ENCODE measurements at regions of chr1 and their contacts with region 1.

Region 1: GRCh38 chr1:41155105-41155504 is 87.0 kb downstream of the SCMH1 start:
- DNase-seq: no peak
- H3K4me3 ChIP-seq: no peak overlapping the region
- H3K27ac ChIP-seq: no peak overlapping the region
- H3K4me1 ChIP-seq: peaks cover 13% of the 10 kb centered on the region
- H3K27me3 ChIP-seq: no peaks in the 10 kb centered on the region
- CTCF ChIP-seq: no peak

Region 2: GRCh38 chr1:39901698-39902459 is 1253.2 kb before region 1 on chr1 and contains the start of gene MYCL:
- CTCF ChIA-PET with region 1: no interaction called
- POLR2A ChIA-PET with region 1: no interaction called
- intact Hi-C with region 1: no loop called
- DNase-seq: peak; percentile 87
- H3K4me3 ChIP-seq: peak within 1 kb of the TSS; percentile 73
- H3K27ac ChIP-seq: no peak within 1 kb of the TSS
- H3K4me1 ChIP-seq: peaks cover 4% of the 10 kb centered on the region
- H3K27me3 ChIP-seq: peaks cover 7% of the 10 kb centered on the region
- CTCF ChIP-seq: peak; percentile 61
- total RNA-seq, gene MYCL: 0.58 and 2.1 TPM in 2 replicates

Region 3: DNA sequence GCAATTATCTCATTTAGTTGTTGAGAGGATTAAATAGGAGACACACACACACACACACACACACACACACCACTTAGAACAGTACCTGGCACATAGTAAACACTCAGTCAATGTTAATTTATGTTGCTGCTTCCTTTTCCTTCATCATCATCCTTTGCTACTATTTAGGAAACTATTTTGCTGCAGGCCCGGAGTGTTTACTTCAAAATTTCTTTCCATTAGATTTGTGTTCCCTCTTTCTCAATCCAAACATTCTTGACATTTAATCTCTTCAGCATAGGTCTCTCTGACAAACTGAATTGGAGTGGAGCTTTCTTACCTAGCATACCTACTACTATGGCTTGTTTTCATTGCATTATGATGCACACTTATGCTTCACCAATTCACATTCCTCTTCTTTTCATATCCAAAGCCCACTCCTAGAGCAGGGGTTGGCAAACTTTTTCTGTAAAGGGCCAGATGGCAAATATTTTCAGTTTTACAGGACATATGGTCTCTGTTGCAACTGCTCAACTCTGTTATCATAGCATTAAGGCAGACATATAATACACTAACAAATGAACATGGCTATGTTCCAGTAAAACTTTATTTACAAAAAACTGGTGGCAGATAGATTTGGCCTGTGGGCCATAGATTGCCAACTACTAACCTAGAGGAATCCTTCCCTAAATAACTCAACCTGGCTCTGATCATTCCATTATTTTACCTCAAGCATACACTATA is 37.5 kb after region 1 on chr1:
- CTCF ChIA-PET with region 1: interaction called, 13 read pairs
- POLR2A ChIA-PET with region 1: no interaction called
- intact Hi-C with region 1: no loop called
- DNase-seq: no peak
- H3K4me3 ChIP-seq: no peak overlapping the region
- H3K27ac ChIP-seq: no peak overlapping the region
- H3K4me1 ChIP-seq: no peaks in the 10 kb centered on the region
- H3K27me3 ChIP-seq: no peaks in the 10 kb centered on the region
- CTCF ChIP-seq: no peak